ENCODE measurements at regions of chr5 and their contacts with region 1.

Region 1: DNA sequence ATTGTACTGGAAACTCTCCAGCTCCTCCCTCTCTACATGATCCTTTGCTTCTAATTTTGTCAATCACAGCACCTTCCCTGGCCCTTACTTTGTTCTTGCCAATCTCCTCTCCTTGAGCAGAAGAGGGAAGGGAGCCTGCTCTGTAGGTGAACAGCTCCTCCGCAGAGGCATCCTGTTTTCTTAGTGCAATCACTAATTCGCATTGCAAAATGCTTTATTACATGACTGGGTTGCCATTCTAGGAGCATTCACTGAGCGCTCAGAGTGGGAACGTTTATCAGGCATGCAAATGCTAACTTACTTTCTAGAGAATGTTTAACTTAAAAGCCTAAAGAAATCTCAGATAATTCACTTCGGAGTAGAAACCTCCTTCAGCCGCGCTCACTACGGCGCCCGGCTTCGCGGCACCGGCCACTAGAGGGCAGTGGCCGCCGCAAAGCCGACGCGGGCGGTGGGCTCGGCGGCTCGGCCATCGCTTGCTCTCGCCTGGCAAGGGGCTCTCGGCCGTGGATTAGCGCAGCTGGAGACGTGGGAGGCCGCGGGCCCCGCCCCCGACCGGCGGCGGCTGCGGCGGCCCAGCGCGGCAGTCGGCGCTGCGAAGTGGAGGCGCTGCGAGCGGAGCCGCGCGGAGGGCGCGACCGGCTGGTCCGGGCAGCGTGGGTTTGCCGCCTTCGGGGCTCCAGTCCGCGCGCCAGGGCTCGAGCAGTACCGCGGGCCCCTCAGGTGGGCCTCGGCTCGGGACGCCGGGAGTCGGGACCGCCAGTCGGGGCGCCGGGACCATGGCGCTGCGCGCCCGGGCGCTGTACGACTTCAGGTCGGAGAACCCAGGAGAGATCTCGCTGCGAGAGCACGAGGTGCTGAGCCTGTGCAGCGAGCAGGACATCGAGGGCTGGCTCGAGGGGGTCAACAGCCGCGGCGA is at the start of gene SNX18:
- DNase-seq: peak; percentile 83 to 99 (median 88)

Region 2: GRCh38 chr5:54243473-54244080 is 273.9 kb before region 1 on chr5:
- intact Hi-C with region 1: no loop called
- DNase-seq: peak in 3 of 10 donors; percentile 13 to 25 (median 21)

Region 3: DNA sequence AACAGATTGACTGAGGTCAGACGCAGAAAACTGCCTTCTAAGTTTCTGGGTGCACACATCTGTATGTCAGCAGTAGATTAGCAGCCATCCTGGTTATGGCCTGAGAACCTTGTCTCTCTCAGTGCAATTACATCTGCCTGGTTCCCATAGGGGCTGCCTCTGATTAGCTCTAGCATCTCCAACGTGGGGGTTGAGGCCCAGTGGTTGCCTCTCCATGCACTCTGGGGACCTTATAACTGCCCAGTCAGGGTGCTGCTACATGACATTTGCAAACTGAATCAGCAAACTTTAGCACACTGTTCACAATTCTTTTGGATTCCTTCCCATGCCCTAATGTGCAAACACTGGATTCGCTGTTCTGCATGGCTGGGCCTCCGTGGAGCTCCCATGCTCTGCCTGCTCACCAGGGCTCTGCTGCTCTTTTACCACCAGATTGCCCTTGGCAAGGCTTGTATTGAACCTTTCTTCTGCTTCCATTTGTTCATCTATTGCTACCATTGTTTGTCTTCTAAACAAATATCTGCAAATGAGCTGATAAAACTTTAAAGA is 36.3 kb after region 1 on chr5:
- intact Hi-C with region 1: loop called (anchors 5 kb)
- DNase-seq: peak; percentile 29 to 95 (median 62)

Region 4: DNA sequence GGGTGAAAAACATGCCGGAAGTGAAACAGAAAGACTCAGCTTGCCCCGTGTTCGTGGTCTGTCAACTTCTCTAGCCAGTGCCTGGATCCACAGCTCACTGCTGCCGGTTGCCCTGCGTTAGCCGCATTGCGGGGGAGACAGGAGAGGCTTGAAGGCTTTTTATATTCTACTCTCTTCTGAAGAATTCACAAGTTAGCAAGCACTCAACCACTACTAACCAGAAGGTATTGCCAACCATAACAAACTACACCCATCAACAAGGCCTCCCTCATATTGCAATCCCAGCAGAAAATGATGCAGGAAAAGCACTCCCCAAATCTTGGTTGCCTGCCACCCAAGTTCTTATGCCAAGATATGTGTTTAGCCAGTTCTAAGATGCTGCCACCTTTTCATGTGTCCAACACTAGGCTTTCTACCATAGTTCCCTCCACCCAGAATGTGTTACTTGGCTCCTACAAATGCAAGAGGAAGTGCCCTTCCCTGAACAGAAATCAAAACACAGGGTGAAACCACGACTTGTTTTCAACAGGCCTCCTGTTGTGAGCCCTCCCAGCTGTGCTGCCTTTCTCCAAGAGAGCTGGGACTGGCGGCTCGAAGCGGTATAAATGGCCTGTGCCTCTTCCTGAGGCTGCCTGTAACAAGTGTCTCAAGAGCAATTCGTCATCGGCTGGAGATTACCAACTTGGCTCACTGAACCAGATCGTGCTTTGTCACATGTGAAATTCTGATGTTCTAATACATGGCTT is 129.1 kb after region 1 on chr5:
- intact Hi-C with region 1: loop called (anchors 10 kb)
- DNase-seq: peak in 3 of 10 donors; percentile 21 to 77 (median 33)

Region 5: DNA sequence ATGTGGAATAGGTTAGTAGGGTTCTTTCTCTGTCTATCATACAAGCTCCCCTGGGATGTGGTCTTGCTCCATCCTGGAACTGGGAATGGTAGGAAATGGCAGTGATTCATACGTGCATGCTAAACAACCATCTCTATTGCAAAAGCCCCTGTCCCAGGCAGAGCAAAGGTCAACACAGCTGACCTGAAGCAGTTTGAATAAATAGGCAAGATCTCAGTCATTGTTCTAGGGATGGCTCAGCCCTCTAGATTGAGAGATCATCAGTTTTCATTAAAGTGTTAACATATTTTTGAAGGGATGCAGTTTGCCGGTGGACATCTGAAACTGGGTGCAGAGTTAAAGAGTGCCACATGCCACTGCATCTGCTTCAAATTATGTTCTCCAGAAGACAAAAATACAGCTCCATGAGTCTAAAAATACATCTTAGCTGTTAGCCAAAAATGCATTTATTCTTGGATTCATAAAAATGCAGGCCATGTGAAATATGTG is 243.8 kb after region 1 on chr5:
- intact Hi-C with region 1: loop called (anchors 10 kb)
- DNase-seq: peak in 1 of 10 donors; percentile 12

Region 6: DNA sequence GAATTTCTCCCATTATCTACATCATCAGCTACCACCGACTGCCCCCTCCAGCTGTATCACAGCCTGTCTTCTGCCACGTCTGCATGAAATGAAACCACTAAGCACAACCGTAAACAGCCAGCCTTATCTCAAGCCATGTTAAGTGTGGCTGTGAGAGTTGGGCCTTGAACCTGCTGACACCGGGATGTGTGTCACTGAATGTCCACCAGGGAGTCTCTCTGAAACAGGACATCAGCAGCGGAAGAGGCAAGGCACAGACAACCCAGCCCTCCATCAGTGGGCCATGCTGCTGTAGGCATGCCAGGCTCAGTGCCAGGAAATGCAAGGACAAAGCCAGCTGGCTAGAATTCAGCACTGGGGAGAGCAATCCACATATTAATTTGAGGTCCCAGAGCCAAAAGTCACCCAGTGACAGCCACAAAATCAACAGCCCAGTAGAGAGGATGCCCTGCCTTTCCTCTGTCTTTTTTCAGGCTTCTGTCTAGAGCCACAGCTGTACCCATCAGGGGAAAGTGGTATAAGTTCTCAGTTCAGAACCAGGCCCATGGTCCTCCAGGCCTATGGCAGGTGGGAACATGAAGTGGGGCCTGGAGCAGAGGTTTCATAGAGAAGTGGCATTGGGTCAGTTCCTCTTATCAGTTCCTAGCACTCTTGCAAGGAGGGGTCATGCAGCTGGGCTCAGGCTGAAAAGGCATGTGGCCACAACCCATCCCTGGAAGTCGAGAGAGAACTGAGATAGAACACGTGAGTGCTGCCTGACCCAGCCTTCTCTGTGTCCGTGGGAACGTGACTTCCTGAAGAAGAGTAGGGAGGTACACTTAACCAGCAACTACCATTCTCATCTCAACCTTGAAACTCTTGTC is 268.5 kb after region 1 on chr5:
- intact Hi-C with region 1: loop called (anchors 5 kb)
- DNase-seq: peak in 8 of 10 donors; percentile 6 to 89 (median 39)

Region 7: GRCh38 chr5:54844905-54845566 is 327.6 kb after region 1 on chr5:
- intact Hi-C with region 1: loop called (anchors 1 kb)
- DNase-seq: no peak

Region 8: GRCh38 chr5:54867310-54867944 is 350.0 kb after region 1 on chr5:
- intact Hi-C with region 1: loop called (anchors 1 kb)
- DNase-seq: no peak